ENCODE measurements at regions of chr5 and their contacts with region 1.

Region 1: DNA sequence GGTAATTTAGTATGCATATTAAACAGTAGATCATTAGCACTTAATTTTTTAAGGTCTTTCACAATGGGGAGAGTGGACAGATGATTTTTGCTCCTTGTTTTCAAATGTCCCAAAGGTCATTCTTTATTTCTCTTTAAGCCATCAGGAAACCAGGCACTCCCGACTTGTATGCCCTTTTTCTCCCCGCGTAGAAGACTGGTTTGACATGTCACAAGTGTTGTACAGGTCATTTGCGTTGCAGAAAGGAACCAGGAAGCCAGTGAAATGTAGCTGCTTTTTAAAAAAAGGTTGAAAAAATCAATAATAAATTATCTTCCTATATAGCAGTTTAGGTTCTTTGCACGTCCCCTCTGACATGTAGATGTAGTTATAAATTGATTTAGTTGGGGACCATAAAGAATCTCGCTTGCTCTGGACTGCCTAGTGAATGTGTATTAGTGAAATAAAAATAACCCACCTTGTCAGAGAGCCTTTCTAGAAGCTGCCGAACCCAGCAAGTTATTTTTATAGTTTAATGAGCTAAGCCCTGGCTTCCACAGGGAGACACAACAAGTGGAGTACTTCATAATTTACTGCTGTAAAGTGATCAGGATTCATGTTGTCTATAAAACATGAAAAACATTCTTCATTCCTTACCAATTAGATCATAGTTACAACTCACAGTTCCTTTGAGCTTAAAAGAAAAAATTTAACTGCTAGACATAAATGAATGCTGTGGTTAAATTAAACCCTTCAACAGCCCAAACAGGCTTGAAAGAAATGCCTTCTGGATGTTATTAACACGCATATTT is 404.5 kb downstream of the CSNK1G3 start:
- DNase-seq: no peak

Region 2: DNA sequence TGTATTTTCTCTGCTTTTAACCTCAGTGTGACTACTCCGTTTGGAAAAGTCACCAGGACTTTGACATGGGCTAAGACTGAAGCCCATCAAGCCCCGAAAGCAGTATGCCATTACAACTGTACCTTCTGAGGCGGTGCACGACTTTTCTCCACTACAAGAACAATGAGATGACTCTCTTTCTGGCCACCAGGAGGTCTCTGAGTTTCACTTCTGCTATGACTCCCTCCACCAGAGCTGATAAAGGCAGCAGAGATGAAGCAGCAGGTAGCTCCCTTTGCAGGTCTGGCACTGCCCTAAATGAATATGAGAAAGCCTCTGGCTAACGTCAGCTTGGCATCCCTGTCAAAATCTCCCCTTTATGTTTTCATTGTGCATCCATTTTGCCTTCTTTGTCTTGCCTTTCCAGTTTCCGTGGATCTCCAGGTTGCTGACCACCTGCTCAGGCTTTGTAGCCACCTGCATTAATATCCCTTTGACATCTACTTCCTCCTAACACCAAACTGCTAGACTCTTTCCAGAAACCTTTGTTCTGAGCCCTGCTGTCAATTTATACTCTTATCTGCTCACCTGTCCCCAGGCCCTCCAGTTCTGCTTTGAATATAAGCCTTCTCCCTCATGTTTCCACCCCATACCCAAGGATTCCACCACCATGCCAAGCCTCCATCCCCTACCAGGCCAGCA is 608.2 kb after region 1 on chr5:
- intact Hi-C with region 1: loop called in 1 of 2 experiments (anchors 5 kb)
- DNase-seq: no peak